Activated CD4-positive, alpha-beta T cell treated with anti-CD3 and anti-CD28 coated beads for 36 hours (primary cell): ENCODE measurements at regions of chr12 and their contacts with region 1.

Region 1: DNA sequence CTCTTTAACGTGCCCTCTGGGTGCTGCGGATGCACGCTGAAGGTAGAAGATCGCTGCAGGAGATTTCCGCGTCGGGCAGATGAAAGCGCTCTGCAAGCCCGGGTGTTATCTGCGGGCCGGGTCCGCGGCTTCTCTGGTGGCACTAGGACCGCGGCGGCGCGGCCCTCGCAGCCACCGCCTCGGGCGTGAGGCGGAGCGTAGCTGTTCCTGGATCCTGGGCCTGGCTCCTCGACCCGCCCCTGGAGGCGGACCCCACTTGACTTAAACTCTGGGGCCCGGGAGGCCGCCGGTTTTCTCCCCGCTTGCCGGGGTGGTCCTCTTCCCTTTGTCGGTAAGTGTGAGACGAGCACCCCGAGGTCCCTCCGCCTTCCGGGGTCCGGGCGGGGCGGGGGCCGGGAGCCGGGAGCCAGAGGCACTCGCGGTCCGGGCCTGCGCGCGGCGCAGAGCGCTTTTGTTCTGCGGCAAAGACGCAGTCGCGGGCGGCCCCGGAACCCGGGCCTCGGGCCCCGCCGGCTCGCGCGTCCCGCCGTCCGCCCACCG is at the start of gene RESF1:
- DNase-seq: peak; percentile 90
- ATAC-seq: peak; percentile 83
- H3K4me3 Mint-ChIP-seq: peak within 1 kb of the TSS; percentile 89
- H3K27ac Mint-ChIP-seq: peak within 1 kb of the TSS; percentile 97
- H3K4me1 Mint-ChIP-seq: peaks cover 72% of the 10 kb centered on the region
- H3K27me3 Mint-ChIP-seq: no peaks in the 10 kb centered on the region
- total RNA-seq, gene RESF1: 52.0 to 78.8 TPM

Region 2: DNA sequence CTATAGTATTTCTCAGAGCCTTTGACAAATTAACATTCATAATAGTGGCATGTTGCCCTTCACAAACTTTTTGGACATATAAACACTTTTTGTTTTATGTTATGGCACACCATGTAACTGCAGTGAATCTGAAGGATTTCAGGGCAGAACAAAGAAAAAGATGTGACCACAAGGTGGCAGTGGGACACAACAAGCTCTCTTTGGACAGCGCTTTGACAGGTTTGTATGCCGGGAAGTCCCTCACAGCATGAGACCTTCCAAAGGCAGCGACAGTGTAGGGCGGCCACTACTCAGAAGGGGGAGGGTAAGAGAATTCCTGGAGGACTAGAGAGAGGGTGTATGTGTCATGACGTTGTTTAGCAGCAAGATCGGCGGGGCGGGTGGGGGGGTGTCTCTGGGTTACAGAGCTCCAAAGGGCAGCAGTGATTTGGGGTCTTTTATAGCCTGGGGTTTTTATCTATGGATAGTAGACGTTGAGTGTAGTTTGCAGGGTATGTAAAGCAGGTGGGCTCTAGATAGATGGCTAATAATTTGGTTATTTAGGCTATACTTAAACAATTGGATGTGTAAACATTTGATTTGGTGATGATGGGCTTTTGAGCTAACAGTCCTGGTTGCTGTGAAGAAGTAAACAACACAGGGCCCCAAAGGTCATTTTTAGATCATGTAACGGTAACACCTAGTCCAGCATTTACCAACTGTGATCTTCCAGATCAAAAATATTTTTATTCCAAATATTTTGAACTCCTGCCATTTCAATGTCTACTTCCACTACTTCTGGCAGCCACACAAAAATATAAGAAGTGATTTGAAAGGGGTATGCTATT is 276.9 kb before region 1 on chr12:
- CTCF ChIA-PET with region 1: no interaction called
- POLR2A ChIA-PET with region 1: no interaction called
- intact Hi-C with region 1: loop called (anchors 1 to 2 kb)
- DNase-seq: peak; percentile 76
- ATAC-seq: peak; percentile 95
- H3K4me3 Mint-ChIP-seq: no peak overlapping the region
- H3K27ac Mint-ChIP-seq: peak overlapping the region; percentile 53
- H3K4me1 Mint-ChIP-seq: peaks cover 6% of the 10 kb centered on the region
- H3K27me3 Mint-ChIP-seq: no peaks in the 10 kb centered on the region

Region 3: DNA sequence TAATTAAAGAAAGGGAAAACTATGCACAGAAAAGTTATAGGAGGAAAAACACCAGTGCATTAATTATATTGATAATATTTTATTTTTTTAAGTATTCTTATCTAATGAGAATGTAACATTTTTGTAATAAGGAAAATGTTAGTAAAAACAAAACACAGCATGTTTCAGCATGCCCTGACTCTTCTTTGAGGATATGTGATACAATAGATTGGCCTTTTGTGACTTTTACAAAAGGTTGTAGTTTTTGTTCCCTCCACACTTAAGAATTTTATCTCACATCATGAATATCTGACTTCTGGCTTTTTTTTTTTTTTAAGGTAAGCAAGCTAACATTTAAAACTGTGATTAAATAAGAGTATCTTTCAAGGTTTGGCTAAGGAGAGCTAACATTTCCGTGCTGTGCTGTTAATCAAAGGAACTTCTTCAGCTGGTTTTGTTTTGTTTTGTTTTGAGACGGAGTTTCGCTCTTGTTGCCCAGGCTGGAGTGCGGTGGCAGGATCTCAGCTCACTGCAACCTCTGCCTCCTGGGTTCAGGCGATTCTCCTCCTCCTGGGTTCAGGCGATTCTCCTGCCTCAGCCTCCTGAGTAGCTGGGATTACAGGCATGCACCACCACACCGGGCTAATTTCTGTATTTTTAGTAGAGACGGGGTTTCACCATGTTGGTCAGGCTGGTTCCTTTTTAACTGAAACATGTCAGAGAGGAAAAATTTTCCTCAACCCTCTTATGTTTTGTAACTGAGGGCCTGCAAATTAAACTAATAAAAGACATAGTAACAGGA is 30.8 kb before region 1 on chr12:
- CTCF ChIA-PET with region 1: no interaction called
- POLR2A ChIA-PET with region 1: interaction called, 4 read pairs
- intact Hi-C with region 1: loop called in 1 of 2 experiments (anchors 1 kb)
- DNase-seq: peak; percentile 31
- ATAC-seq: peak; percentile 72
- H3K4me3 Mint-ChIP-seq: peak overlapping the region; percentile 66
- H3K27ac Mint-ChIP-seq: peak overlapping the region; percentile 95
- H3K4me1 Mint-ChIP-seq: peaks cover 42% of the 10 kb centered on the region
- H3K27me3 Mint-ChIP-seq: no peaks in the 10 kb centered on the region

Region 4: GRCh38 chr12:32025906-32026305 is 66.7 kb after region 1 on chr12:
- CTCF ChIA-PET with region 1: no interaction called
- POLR2A ChIA-PET with region 1: no interaction called
- intact Hi-C with region 1: loop called (anchors 5 kb)
- DNase-seq: peak; percentile 78
- ATAC-seq: peak; percentile 99
- H3K4me3 Mint-ChIP-seq: peak overlapping the region; percentile 40
- H3K27ac Mint-ChIP-seq: peak overlapping the region; percentile 78
- H3K4me1 Mint-ChIP-seq: peaks cover 29% of the 10 kb centered on the region
- H3K27me3 Mint-ChIP-seq: no peaks in the 10 kb centered on the region

Region 5: GRCh38 chr12:32302218-32303173 is 343.3 kb after region 1 on chr12:
- CTCF ChIA-PET with region 1: no interaction called
- POLR2A ChIA-PET with region 1: no interaction called
- intact Hi-C with region 1: loop called in 1 of 2 experiments (anchors 10 kb)
- DNase-seq: peak; percentile 37
- ATAC-seq: peak; percentile 66
- H3K4me3 Mint-ChIP-seq: no peak overlapping the region
- H3K27ac Mint-ChIP-seq: no peak overlapping the region
- H3K4me1 Mint-ChIP-seq: no peaks in the 10 kb centered on the region
- H3K27me3 Mint-ChIP-seq: no peaks in the 10 kb centered on the region